ENCODE measurements at regions of chr11 and their contacts with region 1.

Region 1: DNA sequence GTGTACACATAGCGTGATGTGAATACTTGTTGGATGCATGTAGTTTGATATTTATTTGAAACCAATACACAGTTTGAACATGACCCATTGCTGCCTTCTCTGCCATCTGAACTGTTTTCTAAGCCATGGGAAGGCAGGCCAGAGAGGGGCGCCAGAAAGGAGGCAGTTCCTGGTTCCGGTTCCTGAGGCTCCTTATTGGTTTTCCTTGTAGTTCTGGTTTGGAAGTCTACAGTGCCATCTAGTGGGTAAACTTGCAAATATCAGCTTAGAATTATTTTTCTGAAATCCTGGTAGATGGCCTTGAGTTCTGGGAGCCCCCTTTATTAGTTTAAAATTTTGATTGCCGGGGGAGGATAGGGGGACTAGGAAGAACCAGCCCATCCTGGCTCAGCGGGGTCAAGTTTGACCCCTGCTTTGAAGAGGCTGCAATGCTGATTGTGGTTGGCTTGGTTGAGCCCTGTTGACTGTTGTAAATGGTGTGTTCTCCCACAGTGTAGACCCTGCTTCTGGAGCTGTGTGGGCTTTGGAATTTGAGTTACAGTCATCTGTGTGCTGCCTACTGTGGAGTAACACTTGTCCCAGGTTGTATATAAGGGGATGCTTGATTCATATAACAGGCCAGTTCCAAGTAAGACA is 48.4 kb downstream of the GRAMD1B start:
- DNase-seq: peak; percentile 38 to 65
- H3K4me3 ChIP-seq: no peak overlapping the region
- H3K27ac ChIP-seq: no peak overlapping the region
- H3K4me1 ChIP-seq: peaks cover 24% of the 10 kb centered on the region
- H3K27me3 ChIP-seq: no peaks in the 10 kb centered on the region
- CTCF ChIP-seq: peak; percentile 88

Region 2: DNA sequence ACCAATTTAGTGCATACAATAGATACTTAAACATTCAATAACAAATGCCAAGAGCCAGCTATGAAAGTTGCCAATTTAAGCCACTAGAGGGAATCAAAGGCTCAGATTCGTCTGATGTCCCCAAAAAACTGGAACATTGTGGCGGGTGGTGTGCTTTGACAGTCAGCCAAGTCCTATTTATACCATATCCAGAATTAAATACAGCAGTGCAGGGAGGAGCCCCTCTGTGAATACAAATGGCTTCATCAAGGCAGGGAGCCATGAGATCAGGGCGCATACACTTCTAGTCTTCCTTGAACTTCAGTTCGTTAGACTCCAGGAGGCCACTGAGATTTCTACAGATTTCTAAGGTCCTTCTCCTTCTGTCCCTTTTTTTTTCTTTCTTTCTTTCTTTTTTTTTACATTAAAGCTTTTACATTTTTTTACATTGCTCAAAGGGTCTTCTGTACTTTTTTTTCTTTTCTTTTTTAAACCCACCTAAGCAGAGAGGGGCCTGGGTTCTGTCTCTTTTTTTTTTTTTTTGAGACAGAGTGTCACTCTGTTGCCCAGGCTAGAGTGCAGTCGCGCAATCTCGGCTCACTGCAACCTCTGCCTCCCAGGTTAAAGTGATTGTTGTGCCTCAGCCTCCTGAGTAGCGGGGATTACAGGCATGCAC is 375.0 kb before region 1 on chr11:
- CTCF ChIA-PET with region 1: interaction called, 12 read pairs
- POLR2A ChIA-PET with region 1: no interaction called
- intact Hi-C with region 1: loop called (anchors 2 kb)
- DNase-seq: peak; percentile 33 to 60
- H3K4me3 ChIP-seq: no peak overlapping the region
- H3K27ac ChIP-seq: no peak overlapping the region
- H3K4me1 ChIP-seq: no peaks in the 10 kb centered on the region
- H3K27me3 ChIP-seq: no peaks in the 10 kb centered on the region
- CTCF ChIP-seq: peak; percentile 82

Region 3: DNA sequence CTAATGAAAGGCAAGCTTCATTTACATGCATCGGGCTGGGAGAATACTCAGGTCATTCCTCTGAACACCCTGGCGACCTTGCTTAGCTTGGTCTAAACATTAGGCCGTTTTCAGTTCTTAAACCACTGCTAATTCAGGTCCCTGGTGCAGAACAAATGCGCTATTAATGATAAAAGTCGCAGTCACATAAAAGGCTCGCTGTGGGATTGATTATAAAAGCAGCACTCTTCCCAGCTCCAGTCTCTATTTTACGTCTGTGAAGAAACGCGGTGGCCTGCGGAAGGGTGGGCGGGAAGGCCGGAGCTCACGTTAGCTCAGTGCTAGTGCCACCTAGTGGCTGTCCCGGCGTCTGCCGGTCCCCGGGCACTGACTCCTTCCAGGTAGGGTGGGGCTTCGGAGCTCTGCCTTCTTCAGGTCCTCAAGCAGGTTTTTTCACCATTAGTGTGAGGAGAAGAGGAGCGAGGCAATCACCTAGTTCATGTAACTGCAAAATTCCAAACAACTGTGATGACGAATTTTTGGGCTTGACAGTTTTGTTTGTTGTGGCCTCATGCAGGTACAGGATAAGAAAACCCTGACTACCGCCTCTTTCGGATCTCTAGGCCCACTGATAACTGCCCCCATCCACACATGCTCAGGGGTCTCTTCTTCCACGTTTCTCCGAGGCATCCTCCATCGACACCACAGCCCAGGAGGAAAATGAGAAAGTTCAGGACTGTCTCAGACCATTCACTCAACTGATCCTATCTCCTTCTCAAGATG is 216.9 kb before region 1 on chr11:
- CTCF ChIA-PET with region 1: no interaction called
- POLR2A ChIA-PET with region 1: no interaction called
- intact Hi-C with region 1: loop called (anchors 5 kb)
- DNase-seq: peak; percentile 78 to 86
- H3K4me3 ChIP-seq: peak overlapping the region; percentile 32; the same call in 1 of the 2 replicates
- H3K27ac ChIP-seq: no peak overlapping the region
- H3K4me1 ChIP-seq: peaks cover 15% of the 10 kb centered on the region
- H3K27me3 ChIP-seq: no peaks in the 10 kb centered on the region
- CTCF ChIP-seq: peak; percentile 90

Region 4: DNA sequence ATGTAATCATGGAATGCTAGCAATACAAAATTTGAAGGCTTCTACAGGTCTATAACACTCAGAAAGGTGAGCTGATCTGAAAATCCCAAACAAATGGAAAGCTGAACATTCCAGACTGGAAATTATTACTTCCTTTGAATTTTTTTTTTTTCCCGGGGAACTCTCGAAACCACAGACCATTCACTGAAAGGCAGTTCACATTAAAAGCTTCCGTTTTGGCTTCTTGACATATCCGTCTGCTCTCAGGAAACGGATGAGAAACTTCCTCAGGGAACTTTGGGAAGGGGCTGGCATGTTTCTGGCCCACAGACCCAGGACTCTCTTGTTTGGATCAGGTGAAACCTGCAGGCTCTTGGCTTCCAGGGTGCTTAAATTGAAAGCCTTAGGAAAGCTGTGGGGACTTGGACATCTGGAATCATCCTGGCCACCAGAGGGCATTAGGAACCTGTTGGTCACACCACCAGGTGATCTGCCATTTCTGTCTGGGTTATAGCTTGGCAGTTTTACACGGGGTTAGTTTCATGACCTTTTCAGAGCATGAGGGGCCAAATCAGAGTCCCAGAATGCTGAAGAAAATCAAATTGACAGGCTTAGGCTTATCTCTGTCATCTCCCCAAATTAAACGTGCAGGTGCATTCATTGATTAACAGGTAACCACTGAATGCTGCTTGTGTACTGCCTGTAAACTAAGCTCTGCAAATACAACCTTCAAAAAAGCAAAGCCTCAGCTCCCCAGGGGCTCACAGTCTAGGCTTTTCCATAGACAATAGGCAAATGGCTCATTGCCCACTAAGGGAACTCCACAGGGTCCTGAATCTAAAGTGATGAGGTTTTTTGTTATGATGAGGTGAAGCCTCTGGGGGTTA is 71.1 kb before region 1 on chr11:
- CTCF ChIA-PET with region 1: interaction called, 41 read pairs
- POLR2A ChIA-PET with region 1: interaction called, 9 read pairs
- intact Hi-C with region 1: loop called (anchors 1 kb)
- DNase-seq: peak; percentile 55 to 60
- H3K4me3 ChIP-seq: no peak overlapping the region
- H3K27ac ChIP-seq: no peak overlapping the region
- H3K4me1 ChIP-seq: no peaks in the 10 kb centered on the region
- H3K27me3 ChIP-seq: no peaks in the 10 kb centered on the region
- CTCF ChIP-seq: peak; percentile 88

Region 5: GRCh38 chr11:123443851-123444598 is 34.4 kb before region 1 on chr11:
- CTCF ChIA-PET with region 1: no interaction called
- POLR2A ChIA-PET with region 1: no interaction called
- intact Hi-C with region 1: no loop called
- DNase-seq: no peak
- H3K4me3 ChIP-seq: no peak overlapping the region
- H3K27ac ChIP-seq: no peak overlapping the region
- H3K4me1 ChIP-seq: peaks cover 20% of the 10 kb centered on the region
- H3K27me3 ChIP-seq: no peaks in the 10 kb centered on the region
- CTCF ChIP-seq: no peak

Region 6: DNA sequence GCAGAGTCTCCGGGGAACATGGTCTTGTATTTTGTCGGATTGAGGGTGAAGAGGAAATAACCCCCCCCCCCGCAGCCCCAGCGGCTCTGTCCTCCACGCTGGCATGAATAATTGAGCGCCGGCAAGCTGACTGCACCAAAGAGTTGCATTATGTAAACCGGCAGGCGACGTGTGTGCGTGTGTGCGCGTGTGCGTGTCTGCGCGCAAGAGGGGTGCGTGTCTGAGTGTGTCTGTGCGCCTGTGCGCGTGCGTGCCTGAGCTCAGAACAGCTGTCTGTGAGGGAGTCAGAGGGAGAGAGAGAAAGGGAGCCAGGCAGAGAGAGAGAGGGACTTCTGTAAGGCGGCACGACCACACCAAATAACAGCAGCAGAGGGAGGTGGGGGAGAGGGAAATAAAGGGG is 81.5 kb after region 1 on chr11:
- CTCF ChIA-PET with region 1: interaction called, 12 read pairs
- POLR2A ChIA-PET with region 1: no interaction called
- intact Hi-C with region 1: no loop called
- DNase-seq: no peak
- H3K4me3 ChIP-seq: no peak overlapping the region
- H3K27ac ChIP-seq: no peak overlapping the region
- H3K4me1 ChIP-seq: no peaks in the 10 kb centered on the region
- H3K27me3 ChIP-seq: no peaks in the 10 kb centered on the region
- CTCF ChIP-seq: no peak